WTC11 (cell line): ENCODE measurements at regions of chr19 and their contacts with region 1.

Region 1: GRCh38 chr19:11924886-11925650 is at the start of gene ZNF700:
- DNase-seq: peak; percentile 97
- ATAC-seq: peak; percentile 91
- H3K4me3 Mint-ChIP-seq: peak within 1 kb of the TSS; percentile 96
- H3K27ac Mint-ChIP-seq: peak within 1 kb of the TSS; percentile 99
- H3K4me1 Mint-ChIP-seq: peaks cover 24% of the 10 kb centered on the region
- H3K27me3 Mint-ChIP-seq: no peaks in the 10 kb centered on the region; the same call in 1 of the 2 replicates
- CTCF ChIP-seq: no peak
- total RNA-seq, gene ZNF700: 9.1 to 11.4 TPM (median 10.7 TPM) in 3 replicates

Region 2: GRCh38 chr19:11881151-11881800 is 43.8 kb before region 1 on chr19:
- CTCF ChIA-PET with region 1: interaction called, 19 read pairs
- POLR2A ChIA-PET with region 1: no interaction called
- DNase-seq: peak; percentile 76
- ATAC-seq: peak; percentile 74
- H3K4me3 Mint-ChIP-seq: peak overlapping the region; percentile 13
- H3K27ac Mint-ChIP-seq: no peak overlapping the region
- H3K4me1 Mint-ChIP-seq: peaks cover 1% of the 10 kb centered on the region; the same call in 1 of the 2 replicates
- H3K27me3 Mint-ChIP-seq: peaks cover 8% of the 10 kb centered on the region
- CTCF ChIP-seq: peak; percentile 51

Region 3: GRCh38 chr19:11942843-11943108 is 17.7 kb after region 1 on chr19:
- CTCF ChIA-PET with region 1: interaction called, 15 read pairs
- POLR2A ChIA-PET with region 1: no interaction called
- DNase-seq: no peak
- ATAC-seq: no peak
- H3K4me3 Mint-ChIP-seq: no peak overlapping the region
- H3K27ac Mint-ChIP-seq: no peak overlapping the region
- H3K4me1 Mint-ChIP-seq: no peaks in the 10 kb centered on the region
- H3K27me3 Mint-ChIP-seq: no peaks in the 10 kb centered on the region
- CTCF ChIP-seq: no peak

Region 4: DNA sequence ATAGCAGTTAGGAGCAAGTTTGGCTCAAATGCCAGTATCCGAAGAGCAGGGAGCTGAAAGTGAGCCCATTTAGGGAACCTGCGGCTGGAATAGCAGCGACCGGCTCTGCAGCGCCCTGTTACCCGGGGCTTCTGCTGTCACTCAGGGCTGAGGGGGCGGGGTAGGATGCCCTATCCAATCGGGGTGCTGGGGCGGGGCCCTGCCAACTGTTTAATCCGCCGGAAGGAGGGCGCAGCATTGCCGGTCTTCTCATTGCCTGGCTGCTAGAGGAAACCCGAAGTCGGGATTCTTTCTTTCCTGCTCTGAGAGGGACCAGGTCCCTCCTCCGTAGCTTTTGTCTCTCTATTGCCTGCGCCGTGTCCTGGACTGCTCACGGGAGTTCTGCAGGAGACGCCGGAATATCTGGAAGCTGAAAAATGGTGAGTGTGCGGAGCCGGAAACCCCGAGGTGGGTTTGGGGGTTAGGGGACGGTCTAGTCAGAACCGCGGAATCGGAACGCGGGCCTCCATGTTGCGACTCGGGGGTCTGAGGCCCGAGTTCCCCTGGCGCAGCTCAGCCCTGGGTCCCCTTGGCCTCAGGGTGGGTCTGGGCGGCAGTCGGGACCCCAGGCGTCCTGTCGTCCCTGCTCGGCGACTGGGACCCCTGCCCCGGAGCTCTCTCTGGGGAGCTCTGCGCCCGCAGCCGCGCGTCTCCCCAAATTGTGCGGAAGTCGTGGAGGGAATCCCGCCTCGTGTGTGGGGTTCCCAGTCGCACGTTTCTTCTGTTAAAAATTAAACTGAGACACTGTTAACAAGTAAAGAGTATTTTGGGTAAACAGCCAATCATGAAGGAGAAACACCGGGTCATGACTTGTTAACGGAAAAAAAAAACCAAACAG is 62.6 kb after region 1 on chr19:
- CTCF ChIA-PET with region 1: interaction called, 94 read pairs
- POLR2A ChIA-PET with region 1: interaction called, 18 read pairs
- DNase-seq: peak; percentile 98
- ATAC-seq: peak; percentile 97
- H3K4me3 Mint-ChIP-seq: peak overlapping the region; percentile 98
- H3K27ac Mint-ChIP-seq: peak overlapping the region; percentile 99
- H3K4me1 Mint-ChIP-seq: peaks cover 31% of the 10 kb centered on the region
- H3K27me3 Mint-ChIP-seq: no peaks in the 10 kb centered on the region
- CTCF ChIP-seq: no peak

Region 5: DNA sequence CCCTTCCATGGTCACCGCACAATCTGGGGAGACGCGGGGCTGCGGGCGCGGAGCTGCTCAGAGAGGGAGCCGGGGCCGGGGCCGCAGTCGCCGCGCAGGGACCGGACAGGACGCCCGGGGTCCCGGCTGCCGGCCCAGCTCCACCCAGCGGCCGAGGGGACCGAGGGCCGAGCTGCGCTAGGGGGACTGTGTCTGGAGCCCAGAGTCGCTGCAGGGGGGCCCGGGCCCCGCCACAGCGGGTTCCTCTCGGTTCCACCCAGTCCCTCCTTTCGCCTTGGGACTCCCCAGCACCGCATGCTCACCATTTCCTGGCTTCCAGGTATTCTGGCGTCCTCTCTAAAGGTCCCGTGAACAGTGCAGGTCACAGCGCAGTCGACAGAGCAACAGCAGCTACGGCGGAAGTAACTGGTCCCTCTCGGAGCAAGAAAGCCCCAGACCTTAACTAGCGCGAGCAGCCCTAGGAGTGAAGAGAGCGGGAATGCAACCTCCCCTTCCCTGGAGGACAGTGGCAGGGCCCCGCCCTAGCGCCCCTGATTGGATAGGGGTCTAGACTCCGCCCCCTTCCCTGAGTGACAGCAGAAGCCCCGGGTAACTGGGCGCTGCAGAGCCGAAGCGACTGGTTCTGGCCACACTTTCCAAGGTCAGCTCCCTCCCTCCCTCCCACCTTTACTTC is 127.6 kb after region 1 on chr19 and contains the start of gene ZNF878:
- CTCF ChIA-PET with region 1: interaction called, 15 read pairs
- POLR2A ChIA-PET with region 1: interaction called, 4 read pairs
- DNase-seq: peak; percentile 99
- ATAC-seq: peak; percentile 98
- H3K4me3 Mint-ChIP-seq: peak within 1 kb of the TSS; percentile 91
- H3K27ac Mint-ChIP-seq: peak within 1 kb of the TSS; percentile 98
- H3K4me1 Mint-ChIP-seq: peaks cover 18% of the 10 kb centered on the region
- H3K27me3 Mint-ChIP-seq: peaks cover 2% of the 10 kb centered on the region; the same call in 1 of the 2 replicates
- CTCF ChIP-seq: no peak
- total RNA-seq, gene ZNF878: 10.1 to 12.5 TPM (median 10.7 TPM) in 3 replicates

Region 6: GRCh38 chr19:12092065-12092867 is 167.2 kb after region 1 on chr19:
- CTCF ChIA-PET with region 1: interaction called, 17 read pairs
- POLR2A ChIA-PET with region 1: no interaction called
- DNase-seq: peak; percentile 94
- ATAC-seq: peak; percentile 98
- H3K4me3 Mint-ChIP-seq: peak overlapping the region; percentile 89
- H3K27ac Mint-ChIP-seq: peak overlapping the region; percentile 97
- H3K4me1 Mint-ChIP-seq: peaks cover 12% of the 10 kb centered on the region
- H3K27me3 Mint-ChIP-seq: no peaks in the 10 kb centered on the region
- CTCF ChIP-seq: no peak

Region 7: GRCh38 chr19:12139885-12140547 is 214.9 kb after region 1 on chr19 and contains the start of gene ZNF20:
- CTCF ChIA-PET with region 1: interaction called, 41 read pairs
- POLR2A ChIA-PET with region 1: interaction called, 8 read pairs
- DNase-seq: peak; percentile 99
- ATAC-seq: peak; percentile 93
- H3K4me3 Mint-ChIP-seq: peak within 1 kb of the TSS; percentile 94
- H3K27ac Mint-ChIP-seq: peak within 1 kb of the TSS; percentile 98
- H3K4me1 Mint-ChIP-seq: peaks cover 30% of the 10 kb centered on the region
- H3K27me3 Mint-ChIP-seq: no peaks in the 10 kb centered on the region
- CTCF ChIP-seq: no peak
- total RNA-seq, gene ZNF20: 5.0 to 9.1 TPM (median 7.8 TPM) in 3 replicates